ENCODE measurements at regions of chr1 and their contacts with region 1.

Region 1: GRCh38 chr1:100132566-100133477 is at the starts of genes SASS6 and TRMT13:
- DNase-seq: peak; percentile 98
- H3K4me3 Mint-ChIP-seq: peak within 1 kb of the TSS; percentile 100
- H3K27ac Mint-ChIP-seq: peak within 1 kb of the TSS; percentile 97
- H3K4me1 Mint-ChIP-seq: peaks cover 38% of the 10 kb centered on the region
- H3K27me3 Mint-ChIP-seq: peaks cover 3% of the 10 kb centered on the region
- total RNA-seq, gene SASS6: 16.0 and 17.2 TPM in 2 replicates
- total RNA-seq, gene TRMT13: 24.3 and 25.5 TPM in 2 replicates

Region 2: GRCh38 chr1:99707535-99708142 is 425.2 kb before region 1 on chr1:
- intact Hi-C with region 1: no loop called
- DNase-seq: peak; percentile 87
- H3K4me3 Mint-ChIP-seq: no peak overlapping the region
- H3K27ac Mint-ChIP-seq: no peak overlapping the region
- H3K4me1 Mint-ChIP-seq: peaks cover 7% of the 10 kb centered on the region
- H3K27me3 Mint-ChIP-seq: peaks cover 4% of the 10 kb centered on the region

Region 3: DNA sequence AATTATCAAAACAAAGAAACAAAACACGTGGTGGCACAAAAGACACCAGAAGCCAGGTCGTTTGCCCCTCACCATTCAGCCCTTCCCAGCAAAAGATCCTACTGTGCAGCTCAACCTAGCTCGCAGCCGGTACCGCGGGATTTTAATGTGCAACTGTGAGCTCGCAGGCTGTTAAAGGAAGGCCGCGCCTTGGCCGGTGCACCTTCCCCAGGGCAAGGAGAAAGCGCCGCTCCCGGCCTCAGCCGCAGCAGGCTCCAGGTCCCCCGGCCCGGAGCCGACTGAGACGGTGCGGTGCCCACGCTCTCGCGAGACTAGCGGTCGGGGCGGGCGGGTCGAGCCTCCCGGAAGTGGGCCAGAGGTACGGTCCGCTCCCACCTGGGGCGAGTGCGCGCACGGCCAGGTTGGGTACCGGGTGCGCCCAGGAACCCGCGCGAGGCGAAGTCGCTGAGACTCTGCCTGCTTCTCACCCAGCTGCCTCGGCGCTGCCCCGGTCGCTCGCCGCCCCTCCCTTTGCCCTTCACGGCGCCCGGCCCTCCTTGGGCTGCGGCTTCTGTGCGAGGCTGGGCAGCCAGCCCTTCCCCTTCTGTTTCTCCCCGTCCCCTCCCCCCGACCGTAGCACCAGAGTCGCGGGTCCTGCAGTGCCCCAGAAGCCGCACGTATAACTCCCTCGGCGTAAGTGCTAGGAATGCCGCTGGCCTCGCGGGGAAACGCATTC is 282.9 kb before region 1 on chr1 and contains the start of gene AGL:
- intact Hi-C with region 1: loop called (anchors 2 kb)
- DNase-seq: peak; percentile 96
- H3K4me3 Mint-ChIP-seq: peak within 1 kb of the TSS; percentile 97
- H3K27ac Mint-ChIP-seq: peak within 1 kb of the TSS; percentile 90
- H3K4me1 Mint-ChIP-seq: peaks cover 15% of the 10 kb centered on the region
- H3K27me3 Mint-ChIP-seq: peaks cover 5% of the 10 kb centered on the region
- total RNA-seq, gene AGL: 12.9 and 13.7 TPM in 2 replicates

Region 4: GRCh38 chr1:100249537-100250257 is 116.9 kb after region 1 on chr1 and contains the start of gene DBT:
- intact Hi-C with region 1: loop called (anchors 5 kb)
- DNase-seq: peak; percentile 98
- H3K4me3 Mint-ChIP-seq: no peak within 1 kb of the TSS
- H3K27ac Mint-ChIP-seq: no peak within 1 kb of the TSS
- H3K4me1 Mint-ChIP-seq: peaks cover 11% of the 10 kb centered on the region
- H3K27me3 Mint-ChIP-seq: peaks cover 8% of the 10 kb centered on the region
- total RNA-seq, gene DBT: 11.9 and 12.4 TPM in 2 replicates

Region 5: GRCh38 chr1:100443811-100444571 is 311.2 kb after region 1 on chr1:
- intact Hi-C with region 1: loop called (anchors 2 kb)
- DNase-seq: peak; percentile 82
- H3K4me3 Mint-ChIP-seq: peak overlapping the region; percentile 86
- H3K27ac Mint-ChIP-seq: peak overlapping the region; percentile 96
- H3K4me1 Mint-ChIP-seq: peaks cover 72% of the 10 kb centered on the region
- H3K27me3 Mint-ChIP-seq: no peaks in the 10 kb centered on the region